ENCODE measurements at regions of chr7 and their contacts with region 1.

Region 1: GRCh38 chr7:4753711-4754432 is 21.6 kb upstream of the AP5Z1 start:
- DNase-seq: peak; percentile 71
- H3K4me3 ChIP-seq: no peak overlapping the region
- H3K27ac ChIP-seq: no peak overlapping the region
- H3K4me1 ChIP-seq: no peaks in the 10 kb centered on the region
- CTCF ChIP-seq: peak; percentile 82

Region 2: DNA sequence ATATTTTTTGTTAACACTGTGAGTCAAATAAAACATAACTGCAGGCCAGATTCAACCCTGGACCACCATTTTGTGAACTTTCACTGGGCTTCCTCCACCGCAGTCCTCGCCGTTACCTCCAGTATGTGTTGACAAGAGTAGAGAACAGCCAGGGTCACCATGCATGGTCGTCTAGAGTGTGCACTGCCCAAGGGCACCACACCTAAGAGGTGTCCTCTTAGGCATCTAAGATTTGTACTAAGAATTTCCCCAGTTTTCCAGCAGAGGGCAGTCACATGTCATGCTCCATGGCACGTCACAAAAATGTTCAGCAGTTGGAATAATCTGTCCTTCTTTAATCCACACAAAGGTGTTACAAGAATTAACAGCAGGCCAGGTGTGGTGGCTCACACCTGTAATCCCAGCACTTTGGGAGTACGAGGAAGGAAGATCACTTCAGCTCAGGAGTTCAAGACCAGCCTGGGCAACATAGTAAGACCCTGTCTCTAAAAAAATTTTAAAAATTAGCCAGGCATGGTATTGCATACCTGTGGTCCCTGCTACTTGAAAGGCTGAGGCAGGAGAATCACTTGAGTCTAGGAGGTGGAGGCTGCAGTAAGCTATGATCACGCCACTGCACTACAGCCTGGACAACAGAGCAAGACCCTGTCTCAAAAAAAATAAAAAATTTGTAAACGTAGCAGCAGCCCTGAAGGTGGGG is 143.0 kb before region 1 on chr7:
- CTCF ChIA-PET with region 1: no interaction called
- POLR2A ChIA-PET with region 1: no interaction called
- intact Hi-C with region 1: loop called (anchors 1 kb)
- DNase-seq: peak; percentile 69
- H3K4me3 ChIP-seq: no peak overlapping the region
- H3K27ac ChIP-seq: no peak overlapping the region
- H3K4me1 ChIP-seq: peaks cover 3% of the 10 kb centered on the region
- CTCF ChIP-seq: peak; percentile 83

Measured in OCI-LY7 (cell line).